Activated T-helper 1 cell treated with anti-CD3 and anti-CD28 coated beads, Interleukin-12 subunit alpha, Interleukin-12 subunit beta, Interleukin-2, Interleukin-4 antibody, amounts not matched to agents 30 ng/mL and 10 ng/mL and 1 ng/mL, durations not matched to agents 14 hours and 24 hours and 36 hours (primary cell): ENCODE measurements at regions of chr14 and their contacts with region 1.

Region 1: DNA sequence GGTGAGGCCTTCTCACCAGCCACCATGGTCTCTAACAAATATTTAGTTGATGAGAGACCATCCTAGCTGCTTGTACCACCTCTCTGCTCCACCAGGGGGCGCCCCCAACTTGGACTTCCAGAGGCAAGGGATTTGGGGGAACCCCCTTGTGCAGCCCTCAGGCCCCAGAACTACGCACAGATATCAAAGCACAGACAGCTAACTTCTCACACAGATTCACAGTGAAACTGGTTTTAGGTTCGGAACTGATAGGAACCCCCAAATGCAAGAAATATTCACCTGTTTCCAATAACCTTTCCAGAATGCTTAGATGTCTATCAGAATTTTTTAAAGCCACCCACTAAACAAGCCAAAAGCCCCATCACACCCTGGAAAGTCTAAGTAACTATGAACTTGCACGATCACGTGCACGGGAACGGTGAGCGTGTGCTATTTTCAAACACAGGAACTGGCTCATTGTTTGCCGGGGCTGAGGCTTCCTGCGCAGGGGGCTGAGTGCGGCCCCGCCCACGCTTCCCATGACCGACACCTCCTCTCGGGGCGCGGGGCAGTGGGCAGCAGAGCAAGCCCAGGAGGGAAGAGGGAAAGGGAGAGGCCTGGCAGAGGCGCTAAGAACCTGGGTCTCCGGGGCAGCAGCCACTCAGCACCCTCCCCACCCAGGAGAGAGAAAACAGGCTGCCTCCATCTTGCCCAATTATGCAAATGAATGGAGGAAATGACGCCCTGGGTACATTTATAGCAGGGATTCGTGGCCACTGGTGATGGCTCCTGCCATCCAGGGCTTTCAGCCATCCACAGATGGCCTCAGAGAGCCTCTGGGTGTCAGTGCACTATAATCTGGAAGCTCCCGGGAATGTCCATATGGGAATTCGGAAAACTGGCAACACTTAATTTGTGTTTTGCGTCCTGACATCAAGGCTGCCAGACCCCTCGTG is 79.4 kb upstream of the GPR68 start:
- DNase-seq: peak; percentile 84
- H3K4me3 Mint-ChIP-seq: peak overlapping the region; percentile 80
- H3K27ac Mint-ChIP-seq: peak overlapping the region; percentile 99
- H3K4me1 Mint-ChIP-seq: peaks cover 59% of the 10 kb centered on the region
- H3K27me3 Mint-ChIP-seq: no peaks in the 10 kb centered on the region

Region 2: DNA sequence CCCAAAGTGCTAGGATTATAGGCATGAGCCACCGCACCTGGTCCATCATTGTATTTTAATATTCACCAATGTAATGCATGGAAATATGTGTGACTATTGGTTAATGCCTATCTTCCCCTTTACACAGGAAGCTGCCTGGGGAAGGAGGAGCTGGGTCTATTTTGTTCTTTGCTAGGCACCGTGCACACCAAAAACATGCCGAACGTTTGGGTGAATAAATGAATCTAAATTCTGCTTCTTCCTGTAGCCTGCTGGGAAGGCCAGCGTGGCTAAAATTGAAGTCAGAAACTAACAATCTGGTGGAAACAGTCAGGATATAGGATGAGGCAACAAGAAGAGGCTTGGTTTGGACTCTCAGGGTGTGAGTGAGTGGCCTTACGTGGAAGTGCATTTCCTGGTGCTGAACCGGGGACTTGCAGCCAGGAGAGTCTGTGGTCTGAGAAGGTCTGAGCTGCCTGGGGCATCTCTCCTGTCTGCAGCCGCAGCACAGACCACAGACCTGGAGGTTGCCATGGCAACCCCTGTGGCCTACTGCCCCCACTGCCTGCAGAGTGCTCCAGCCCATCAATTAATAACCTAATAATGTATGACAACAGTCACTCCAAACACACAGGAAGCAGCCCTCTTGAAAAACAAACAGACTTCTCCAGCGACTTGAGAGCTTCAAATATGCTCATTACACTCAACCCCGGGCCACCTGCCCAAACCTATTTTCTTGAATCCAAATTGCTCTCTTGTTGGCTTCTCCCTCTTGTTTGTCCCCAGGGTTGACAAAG is 73.9 kb before region 1 on chr14:
- intact Hi-C with region 1: no loop called
- DNase-seq: peak; percentile 61
- H3K4me3 Mint-ChIP-seq: peak overlapping the region; percentile 70
- H3K27ac Mint-ChIP-seq: peak overlapping the region; percentile 93
- H3K4me1 Mint-ChIP-seq: peaks cover 80% of the 10 kb centered on the region
- H3K27me3 Mint-ChIP-seq: no peaks in the 10 kb centered on the region

Region 3: DNA sequence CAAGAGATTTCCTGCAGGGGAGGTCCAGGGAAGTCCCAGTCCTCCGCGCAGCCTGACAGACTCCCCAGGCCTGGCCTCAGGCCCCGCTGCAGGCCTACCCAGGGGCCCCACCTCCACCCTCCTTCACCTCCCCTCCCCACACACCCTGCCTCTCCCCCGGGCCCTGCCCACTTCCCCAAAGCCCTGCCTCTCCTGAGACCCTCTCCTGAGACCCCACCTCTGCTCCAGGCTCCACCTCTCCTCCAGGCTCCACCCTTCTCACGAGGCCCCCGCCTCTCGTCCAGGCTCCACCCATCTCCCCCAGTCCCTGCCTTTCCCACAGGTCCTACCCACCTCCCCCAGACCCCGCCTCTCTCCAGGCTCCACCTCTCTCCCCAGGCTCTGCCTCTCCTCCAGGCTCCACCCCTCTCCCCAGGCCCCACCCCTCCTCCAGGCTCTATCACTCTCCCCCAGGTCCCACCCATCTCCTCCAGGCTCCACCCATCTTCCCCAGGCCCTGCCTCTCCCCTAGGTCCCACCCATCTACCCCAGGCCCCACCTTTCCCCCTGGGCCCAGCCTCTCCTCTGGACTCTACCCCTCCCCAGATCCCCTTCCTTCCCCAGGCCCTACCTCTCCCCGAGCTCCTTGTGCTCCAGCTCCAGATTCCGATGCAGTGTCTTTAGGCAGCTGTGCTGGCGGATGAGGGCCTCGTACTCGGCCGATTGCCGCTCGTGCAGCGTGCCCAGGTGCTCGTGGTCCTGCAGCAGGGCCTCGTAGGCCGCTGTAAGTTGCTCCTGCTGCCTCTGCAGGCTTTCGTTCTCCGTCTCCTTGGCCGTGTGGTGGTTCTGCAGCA is 20.6 kb before region 1 on chr14:
- intact Hi-C with region 1: loop called (anchors 1 kb)
- DNase-seq: peak; percentile 36
- H3K4me3 Mint-ChIP-seq: peak overlapping the region; percentile 63
- H3K27ac Mint-ChIP-seq: peak overlapping the region; percentile 98
- H3K4me1 Mint-ChIP-seq: peaks cover 72% of the 10 kb centered on the region
- H3K27me3 Mint-ChIP-seq: no peaks in the 10 kb centered on the region

Region 4: GRCh38 chr14:91410771-91411536 is 87.0 kb after region 1 on chr14:
- intact Hi-C with region 1: no loop called
- DNase-seq: no peak
- H3K4me3 Mint-ChIP-seq: peak overlapping the region; percentile 72
- H3K27ac Mint-ChIP-seq: peak overlapping the region; percentile 96
- H3K4me1 Mint-ChIP-seq: peaks cover 89% of the 10 kb centered on the region
- H3K27me3 Mint-ChIP-seq: no peaks in the 10 kb centered on the region

Region 5: DNA sequence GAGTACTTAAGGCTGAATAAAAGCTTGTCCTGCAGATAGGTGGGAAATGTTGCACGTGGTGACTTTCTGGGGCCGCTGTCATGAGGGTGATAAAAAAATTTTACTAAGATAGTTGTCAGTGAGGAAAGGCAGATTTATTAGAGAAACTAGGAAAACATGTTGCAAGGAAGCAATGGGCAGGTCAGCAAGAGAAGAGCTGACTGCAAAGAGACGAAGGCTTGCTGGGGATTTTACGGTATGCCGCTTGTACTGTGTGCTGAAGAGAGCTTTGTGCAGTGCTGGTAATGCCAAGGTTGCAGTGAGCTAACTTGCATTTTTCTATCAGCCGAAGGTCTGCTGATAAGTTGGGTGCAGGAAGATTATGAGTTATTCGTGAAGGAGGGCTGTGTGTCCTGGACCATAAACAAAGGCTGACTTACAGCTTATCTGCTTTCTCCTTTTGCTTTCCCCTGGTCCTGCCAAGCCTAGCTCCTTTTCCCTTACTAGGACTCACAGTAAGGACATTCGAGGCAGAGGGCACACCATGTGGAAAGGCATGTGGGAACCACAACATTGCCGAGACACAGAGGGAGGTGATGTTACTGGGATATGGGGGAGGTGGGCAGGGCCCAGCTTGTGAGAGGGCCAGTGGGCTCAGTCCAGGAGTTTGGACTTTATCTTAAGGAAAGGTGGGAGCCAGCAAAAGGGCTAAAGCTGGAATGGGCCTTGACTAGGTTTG is 101.0 kb after region 1 on chr14:
- intact Hi-C with region 1: loop called (anchors 1 kb)
- DNase-seq: no peak
- H3K4me3 Mint-ChIP-seq: no peak overlapping the region
- H3K27ac Mint-ChIP-seq: no peak overlapping the region
- H3K4me1 Mint-ChIP-seq: peaks cover 11% of the 10 kb centered on the region
- H3K27me3 Mint-ChIP-seq: no peaks in the 10 kb centered on the region

Region 6: GRCh38 chr14:91464615-91465205 is 140.8 kb after region 1 on chr14:
- intact Hi-C with region 1: loop called (anchors 1 kb)
- DNase-seq: no peak
- H3K4me3 Mint-ChIP-seq: no peak overlapping the region
- H3K27ac Mint-ChIP-seq: peak overlapping the region; percentile 81
- H3K4me1 Mint-ChIP-seq: peaks cover 20% of the 10 kb centered on the region
- H3K27me3 Mint-ChIP-seq: no peaks in the 10 kb centered on the region